ENCODE measurements at regions of chr9 and their contacts with region 1.

Region 1: DNA sequence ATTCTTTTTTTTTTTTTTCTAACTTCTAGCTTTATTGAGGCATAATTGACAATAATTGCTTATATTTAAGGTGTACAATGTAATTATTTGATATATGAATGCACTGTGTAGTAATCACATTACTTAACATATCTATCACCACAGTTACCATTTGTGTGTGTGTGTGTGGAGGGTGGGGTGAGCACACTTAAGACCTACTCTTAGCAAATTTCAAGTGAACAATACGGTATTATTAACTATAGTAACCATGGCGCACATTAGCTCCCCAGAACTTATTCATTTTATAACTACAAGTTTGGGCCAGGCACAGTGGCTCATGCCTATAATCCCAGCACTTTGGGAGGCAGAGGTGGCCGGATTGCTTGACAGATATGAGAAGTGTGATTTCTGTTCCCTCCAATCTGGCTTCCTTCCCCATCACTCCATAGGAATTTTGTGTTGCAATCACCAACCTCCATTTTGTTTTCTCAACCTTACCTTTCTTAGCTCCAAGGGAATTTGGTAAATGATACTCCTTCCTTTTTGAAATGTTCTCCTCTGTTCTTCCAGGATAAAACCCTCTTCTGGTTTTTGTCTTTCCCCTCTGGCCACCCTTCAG is 14.9 kb downstream of the TXN start:
- DNase-seq: no peak
- H3K4me3 ChIP-seq: no peak overlapping the region
- H3K27ac ChIP-seq: peak overlapping the region; percentile 23
- H3K4me1 ChIP-seq: no peaks in the 10 kb centered on the region; the same call in 1 of the 2 replicates
- H3K27me3 ChIP-seq: no peaks in the 10 kb centered on the region
- CTCF ChIP-seq: no peak

Region 2: GRCh38 chr9:110370316-110370715 is 129.0 kb after region 1 on chr9:
- CTCF ChIA-PET with region 1: no interaction called
- POLR2A ChIA-PET with region 1: no interaction called
- intact Hi-C with region 1: no loop called
- DNase-seq: peak in 1 of 2 experiments; percentile 57
- H3K4me3 ChIP-seq: no peak overlapping the region
- H3K27ac ChIP-seq: no peak overlapping the region
- H3K4me1 ChIP-seq: peaks cover 23% of the 10 kb centered on the region
- H3K27me3 ChIP-seq: no peaks in the 10 kb centered on the region
- CTCF ChIP-seq: no peak

Region 3: GRCh38 chr9:110399983-110400382 is 158.6 kb after region 1 on chr9:
- CTCF ChIA-PET with region 1: no interaction called
- POLR2A ChIA-PET with region 1: no interaction called
- intact Hi-C with region 1: no loop called
- DNase-seq: peak; percentile 39 to 53
- H3K4me3 ChIP-seq: no peak overlapping the region
- H3K27ac ChIP-seq: no peak overlapping the region
- H3K4me1 ChIP-seq: no peaks in the 10 kb centered on the region
- H3K27me3 ChIP-seq: no peaks in the 10 kb centered on the region
- CTCF ChIP-seq: no peak

Region 4: DNA sequence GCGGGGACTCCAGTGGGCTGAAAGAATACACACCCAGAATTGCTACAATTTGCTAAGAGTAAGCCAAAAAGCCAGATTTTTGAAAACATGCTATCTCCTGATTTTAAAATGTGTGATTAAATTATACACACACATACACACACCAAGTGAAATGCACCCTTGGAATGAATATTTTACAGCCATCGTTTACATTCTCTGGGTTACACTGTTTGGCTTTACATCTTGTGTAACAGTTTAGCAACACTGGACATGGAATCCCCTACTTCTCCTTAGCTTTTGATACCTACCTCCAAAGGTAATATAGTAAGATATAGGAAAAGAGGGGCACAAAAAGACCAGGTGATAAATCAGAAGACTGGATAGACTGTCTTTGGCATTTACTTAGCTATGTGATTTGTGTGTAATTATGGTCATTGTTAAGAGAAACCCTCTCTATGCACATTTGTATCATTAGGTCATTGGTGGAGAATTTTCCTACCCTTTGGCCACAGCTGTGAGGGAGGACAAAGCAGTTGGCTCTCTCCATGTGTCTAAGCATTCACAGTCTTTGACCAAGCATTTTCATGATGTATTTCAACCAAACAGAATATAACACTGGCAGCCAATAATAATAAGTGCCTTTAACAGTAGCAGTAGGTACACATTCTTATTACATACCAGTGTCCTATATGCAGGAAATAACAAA is 330.6 kb after region 1 on chr9:
- CTCF ChIA-PET with region 1: interaction called, 10 read pairs
- POLR2A ChIA-PET with region 1: no interaction called
- intact Hi-C with region 1: no loop called
- DNase-seq: no peak
- H3K4me3 ChIP-seq: no peak overlapping the region
- H3K27ac ChIP-seq: no peak overlapping the region
- H3K4me1 ChIP-seq: peaks cover 20% of the 10 kb centered on the region
- H3K27me3 ChIP-seq: no peaks in the 10 kb centered on the region
- CTCF ChIP-seq: no peak

Measured in PC-9 (cell line).